ENCODE measurements at regions of chrX and their contacts with region 1.

Region 1: GRCh38 chrX:135086197-135086854 is 34.0 kb downstream of the ETDB start:
- DNase-seq: no peak

Region 2: DNA sequence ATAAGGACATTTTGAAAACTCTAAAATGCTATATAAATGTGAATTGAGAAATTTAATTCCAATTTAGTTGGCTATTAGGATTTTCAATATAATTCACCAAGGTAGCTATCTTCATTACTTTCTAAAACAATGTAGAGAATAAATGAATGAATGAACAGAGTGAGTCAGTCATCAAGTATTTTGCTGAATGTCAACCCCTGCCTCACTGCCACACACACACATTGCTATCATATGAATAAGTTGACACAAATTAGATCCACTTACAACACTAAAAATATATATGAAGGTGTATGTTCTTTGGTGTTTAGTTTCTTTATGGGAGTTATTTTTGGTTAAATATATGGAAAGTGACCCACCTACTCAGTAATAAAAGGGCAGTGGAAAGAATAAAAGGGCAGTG is 236.9 kb before region 1 on chrX:
- intact Hi-C with region 1: no loop called
- DNase-seq: no peak

Region 3: DNA sequence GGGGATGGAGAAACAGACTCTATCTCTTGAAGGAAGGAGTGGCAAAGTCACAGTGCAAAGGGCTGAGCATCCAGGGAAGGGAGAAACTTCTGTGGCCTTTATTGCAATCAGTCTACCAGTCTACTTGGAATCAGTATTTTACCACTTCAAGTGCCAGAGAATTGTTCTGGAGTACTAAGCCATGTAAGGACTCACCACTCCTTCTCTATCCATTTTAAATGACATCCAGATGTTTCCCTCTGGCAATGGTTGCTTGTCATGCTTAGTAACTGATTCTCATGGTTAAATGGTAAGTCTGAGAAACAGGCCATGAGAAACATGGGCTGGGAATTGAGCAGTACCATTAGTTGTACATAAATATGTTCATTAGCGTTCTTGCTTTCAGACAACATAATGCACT is 116.6 kb before region 1 on chrX:
- intact Hi-C with region 1: loop called (anchors 5 kb)
- DNase-seq: no peak

Region 4: DNA sequence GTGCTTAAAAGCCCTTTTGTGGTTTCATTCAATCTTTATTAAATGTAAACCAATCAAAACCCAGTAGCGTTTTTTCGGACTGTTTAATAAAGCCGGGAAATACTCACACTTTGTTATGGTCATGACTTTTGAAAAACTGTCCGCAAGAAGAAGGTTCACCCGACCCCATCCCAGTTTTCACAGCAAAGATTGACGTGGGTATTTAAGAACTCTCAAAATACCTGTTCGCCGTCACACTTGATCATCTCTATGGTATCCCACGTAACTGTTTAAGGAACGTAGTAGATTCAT is 13.1 kb after region 1 on chrX:
- intact Hi-C with region 1: no loop called
- DNase-seq: no peak

Region 5: GRCh38 chrX:135315864-135316263 is 229.5 kb after region 1 on chrX:
- intact Hi-C with region 1: no loop called
- DNase-seq: no peak

Measured in cardiac septum (tissue), 1 donor.